Mammary epithelial cell (primary cell): ENCODE measurements at regions of chr13 and their contacts with region 1.

Region 1: GRCh38 chr13:50760751-50761150 is 82.7 kb downstream of the DLEU7 start:
- DNase-seq: no peak
- H3K4me3 ChIP-seq: no peak overlapping the region
- H3K27ac ChIP-seq: no peak overlapping the region
- H3K4me1 ChIP-seq: peaks cover 21% of the 10 kb centered on the region
- H3K27me3 ChIP-seq: no peaks in the 10 kb centered on the region
- CTCF ChIP-seq: no peak

Region 2: GRCh38 chr13:50106559-50106958 is 654.2 kb before region 1 on chr13:
- CTCF ChIA-PET with region 1: interaction called, 15 read pairs
- dilution Hi-C with region 1: no loop called
- in situ Hi-C with region 1: no loop called
- intact Hi-C with region 1: no loop called
- DNase-seq: no peak
- H3K4me3 ChIP-seq: no peak overlapping the region
- H3K27ac ChIP-seq: no peak overlapping the region
- H3K4me1 ChIP-seq: peaks cover 3% of the 10 kb centered on the region
- H3K27me3 ChIP-seq: no peaks in the 10 kb centered on the region
- CTCF ChIP-seq: no peak

Region 3: DNA sequence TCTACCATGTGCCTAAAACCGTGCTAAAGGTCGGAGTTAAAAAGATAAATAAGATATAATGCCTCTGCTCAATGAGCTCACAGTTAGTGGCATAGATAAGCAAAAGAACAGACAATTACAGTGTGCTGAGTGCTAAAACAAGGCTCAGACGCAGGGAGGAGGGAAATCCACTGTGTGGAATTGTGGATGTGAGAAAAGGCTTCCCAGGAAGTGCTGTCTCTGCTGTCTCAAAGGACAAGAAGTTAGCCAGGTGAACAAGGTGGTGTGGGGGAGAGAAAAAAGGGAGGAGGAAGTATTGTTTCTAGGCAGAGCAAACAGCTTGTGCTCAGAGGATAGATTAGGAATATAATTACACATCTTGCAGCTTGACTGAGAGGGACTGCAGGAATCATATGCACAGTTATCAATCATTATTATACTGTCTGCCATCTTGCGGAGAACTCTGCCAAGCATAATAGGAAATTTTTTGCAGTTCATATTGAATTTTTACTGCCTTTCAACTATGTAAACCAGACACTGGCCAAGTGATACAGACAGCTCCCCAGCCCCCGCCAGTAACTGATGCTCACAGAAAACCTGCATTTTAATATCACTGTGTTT is 341.0 kb after region 1 on chr13:
- CTCF ChIA-PET with region 1: no interaction called
- dilution Hi-C with region 1: no loop called
- in situ Hi-C with region 1: no loop called
- intact Hi-C with region 1: no loop called
- DNase-seq: no peak
- H3K4me3 ChIP-seq: no peak overlapping the region
- H3K27ac ChIP-seq: no peak overlapping the region
- H3K4me1 ChIP-seq: no peaks in the 10 kb centered on the region
- H3K27me3 ChIP-seq: no peaks in the 10 kb centered on the region
- CTCF ChIP-seq: no peak

Region 4: DNA sequence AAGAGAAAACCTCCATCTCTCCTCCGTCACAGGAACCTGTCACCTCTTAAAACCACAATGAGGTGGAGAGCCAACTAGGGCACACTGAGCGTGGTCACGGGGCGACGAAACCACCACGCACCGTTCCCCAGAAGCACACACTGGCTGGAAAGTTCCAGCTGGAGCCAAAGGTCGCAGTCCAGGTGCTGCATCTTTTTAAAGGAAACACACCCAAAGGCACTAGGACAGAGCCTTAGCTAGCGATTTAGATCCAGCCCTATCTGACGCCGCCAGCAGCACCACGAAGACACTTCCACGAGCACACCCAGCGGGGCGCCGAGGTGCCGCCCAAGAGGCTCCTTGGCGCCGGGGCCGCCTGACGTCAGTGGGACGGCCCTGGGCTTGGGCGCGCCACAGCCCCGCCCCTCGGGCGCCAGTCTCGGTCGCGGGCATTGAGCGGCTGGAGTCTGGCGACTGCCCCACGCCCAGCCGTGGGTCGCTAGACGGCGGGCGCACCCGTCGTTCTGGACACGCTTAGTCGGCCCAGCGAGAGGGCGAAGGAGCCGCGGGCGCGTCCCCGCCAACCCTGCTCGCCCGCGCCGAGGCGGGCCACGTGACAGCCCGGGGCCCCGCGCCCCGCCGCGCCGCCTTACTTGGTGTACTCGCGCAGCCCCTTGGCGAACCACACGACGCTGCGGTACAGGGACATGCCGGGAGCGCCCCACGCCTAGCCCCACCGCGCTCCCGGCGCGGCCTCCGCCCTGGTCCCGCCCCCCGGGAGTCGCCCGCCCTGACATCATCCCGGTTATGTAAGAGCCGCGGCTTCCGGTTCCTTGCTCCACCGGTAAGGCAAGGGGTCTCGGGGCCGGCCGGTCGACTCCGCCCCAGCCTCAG is 1042.9 kb after region 1 on chr13 and contains the start of gene DHRS12:
- CTCF ChIA-PET with region 1: no interaction called
- dilution Hi-C with region 1: no loop called
- in situ Hi-C with region 1: no loop called
- intact Hi-C with region 1: no loop called
- DNase-seq: peak; percentile 80
- H3K4me3 ChIP-seq: peak within 1 kb of the TSS; percentile 73 to 84 (median 75)
- H3K27ac ChIP-seq: peak within 1 kb of the TSS; percentile 87
- H3K4me1 ChIP-seq: peaks cover 22% of the 10 kb centered on the region
- H3K27me3 ChIP-seq: no peaks in the 10 kb centered on the region
- CTCF ChIP-seq: peak in 1 of 2 donors; percentile 16
- total RNA-seq, gene DHRS12: 5.5 to 8.7 TPM